ENCODE measurements at regions of chr12 and their contacts with region 1.

Region 1: DNA sequence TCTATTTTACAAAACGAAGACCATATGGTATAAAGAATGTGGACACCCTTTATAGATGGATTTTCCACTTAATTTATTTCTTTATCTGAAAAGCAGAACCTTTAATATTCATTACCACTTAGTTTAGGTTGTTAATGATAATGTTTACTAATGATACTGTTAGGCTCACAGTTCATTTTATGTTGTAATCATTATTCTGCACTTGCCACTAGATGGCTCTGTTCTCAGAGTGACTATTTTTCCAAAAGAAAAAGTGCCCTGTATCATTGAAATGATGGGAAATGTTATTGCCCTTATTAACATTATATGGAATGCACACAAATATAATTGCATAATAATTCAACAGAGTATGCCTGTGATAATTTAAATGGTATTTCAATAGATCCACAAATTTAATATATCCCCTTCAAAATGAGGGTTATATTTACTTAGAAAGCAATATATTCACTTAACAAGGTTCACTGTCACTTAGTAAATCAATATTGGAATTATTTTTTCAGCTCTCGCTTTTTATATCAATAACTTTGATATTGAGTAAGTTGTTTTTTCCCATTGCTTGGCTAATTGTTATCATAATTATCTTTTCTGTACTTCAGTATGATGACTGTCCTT is 95.7 kb downstream of the PDE3A start:
- DNase-seq: peak; percentile 33
- H3K4me3 ChIP-seq: no peak overlapping the region
- H3K27ac ChIP-seq: no peak overlapping the region
- H3K4me1 ChIP-seq: no peaks in the 10 kb centered on the region
- H3K27me3 ChIP-seq: no peaks in the 10 kb centered on the region
- CTCF ChIP-seq: peak; percentile 76

Region 2: DNA sequence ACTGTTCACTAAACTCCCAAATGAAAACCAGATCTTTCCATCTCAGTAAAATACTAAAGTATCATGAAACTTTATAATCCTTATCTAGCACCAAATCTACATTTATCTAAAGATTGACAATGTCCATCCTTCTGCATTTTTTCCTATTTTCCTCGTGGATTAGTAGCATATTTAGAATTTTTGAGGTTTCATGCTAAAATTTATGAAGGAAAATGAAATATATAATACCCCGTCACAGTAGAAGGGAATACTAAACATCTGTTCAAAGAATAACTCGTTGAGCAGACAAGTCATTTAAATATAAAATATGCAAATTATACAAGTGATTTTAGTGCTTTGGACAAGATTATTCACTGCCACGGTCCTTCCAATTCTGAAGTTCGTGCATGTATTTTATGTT is 108.4 kb after region 1 on chr12:
- CTCF ChIA-PET with region 1: no interaction called
- POLR2A ChIA-PET with region 1: no interaction called
- intact Hi-C with region 1: no loop called
- DNase-seq: no peak
- H3K4me3 ChIP-seq: no peak overlapping the region
- H3K27ac ChIP-seq: no peak overlapping the region
- H3K4me1 ChIP-seq: no peaks in the 10 kb centered on the region
- H3K27me3 ChIP-seq: peaks cover 18% of the 10 kb centered on the region
- CTCF ChIP-seq: no peak

Region 3: DNA sequence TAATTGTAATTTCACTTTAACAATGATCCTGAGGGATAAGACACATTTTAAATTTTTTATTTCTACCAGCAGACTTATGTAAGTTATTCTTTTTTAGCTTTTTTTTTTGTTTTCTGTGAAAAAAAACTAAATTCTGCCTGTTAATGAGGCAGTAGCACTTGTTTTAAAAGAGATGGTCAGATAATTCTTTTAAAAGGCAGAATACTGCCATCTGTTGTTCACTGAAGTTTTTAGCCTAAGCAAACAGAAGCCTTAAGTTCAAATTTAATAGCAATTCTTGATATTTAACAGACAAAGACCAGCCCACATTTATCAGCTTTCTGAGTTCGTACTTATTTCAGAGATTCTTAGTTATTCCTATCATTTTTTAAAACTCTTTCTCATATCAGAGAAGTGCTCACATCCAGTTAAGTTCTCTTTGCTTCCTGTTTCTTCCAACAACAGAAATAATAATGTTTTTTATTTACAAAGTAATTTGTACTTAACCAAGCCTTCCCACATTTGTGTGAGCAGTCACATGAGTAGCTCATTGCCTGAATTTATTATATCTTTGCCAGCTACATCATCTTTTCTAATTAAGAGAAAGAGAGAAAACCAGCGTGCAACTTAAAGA is 137.8 kb after region 1 on chr12:
- CTCF ChIA-PET with region 1: no interaction called
- POLR2A ChIA-PET with region 1: no interaction called
- intact Hi-C with region 1: loop called (anchors 1 kb)
- DNase-seq: peak; percentile 42
- H3K4me3 ChIP-seq: no peak overlapping the region
- H3K27ac ChIP-seq: no peak overlapping the region
- H3K4me1 ChIP-seq: no peaks in the 10 kb centered on the region
- H3K27me3 ChIP-seq: peaks cover 6% of the 10 kb centered on the region
- CTCF ChIP-seq: peak; percentile 63

Measured in A673 (cell line).